ENCODE measurements at regions of chr1 and their contacts with region 1.

Region 1: GRCh38 chr1:203702130-203702577 is 62.8 kb upstream of the LAX1 start:
- DNase-seq: peak; percentile 48
- ATAC-seq: peak; percentile 54
- H3K4me3 Mint-ChIP-seq: no peak overlapping the region
- H3K27ac Mint-ChIP-seq: no peak overlapping the region
- H3K4me1 Mint-ChIP-seq: peaks cover 5% of the 10 kb centered on the region
- H3K27me3 Mint-ChIP-seq: no peaks in the 10 kb centered on the region
- CTCF ChIP-seq: peak; percentile 83

Region 2: GRCh38 chr1:203486618-203487370 is 215.4 kb before region 1 on chr1:
- CTCF ChIA-PET with region 1: interaction called, 11 read pairs
- POLR2A ChIA-PET with region 1: no interaction called
- intact Hi-C with region 1: no loop called
- DNase-seq: no peak
- ATAC-seq: no peak
- H3K4me3 Mint-ChIP-seq: peak overlapping the region; percentile 83
- H3K27ac Mint-ChIP-seq: no peak overlapping the region
- H3K4me1 Mint-ChIP-seq: peaks cover 5% of the 10 kb centered on the region
- H3K27me3 Mint-ChIP-seq: peaks cover 2% of the 10 kb centered on the region
- CTCF ChIP-seq: no peak

Region 3: GRCh38 chr1:203504397-203505250 is 197.5 kb before region 1 on chr1:
- CTCF ChIA-PET with region 1: interaction called, 160 read pairs
- POLR2A ChIA-PET with region 1: interaction called, 3 read pairs
- intact Hi-C with region 1: loop called (anchors 1 kb)
- DNase-seq: peak; percentile 45
- ATAC-seq: peak; percentile 57
- H3K4me3 Mint-ChIP-seq: no peak overlapping the region
- H3K27ac Mint-ChIP-seq: peak overlapping the region; percentile 10
- H3K4me1 Mint-ChIP-seq: peaks cover 2% of the 10 kb centered on the region
- H3K27me3 Mint-ChIP-seq: peaks cover 12% of the 10 kb centered on the region
- CTCF ChIP-seq: peak; percentile 83

Region 4: DNA sequence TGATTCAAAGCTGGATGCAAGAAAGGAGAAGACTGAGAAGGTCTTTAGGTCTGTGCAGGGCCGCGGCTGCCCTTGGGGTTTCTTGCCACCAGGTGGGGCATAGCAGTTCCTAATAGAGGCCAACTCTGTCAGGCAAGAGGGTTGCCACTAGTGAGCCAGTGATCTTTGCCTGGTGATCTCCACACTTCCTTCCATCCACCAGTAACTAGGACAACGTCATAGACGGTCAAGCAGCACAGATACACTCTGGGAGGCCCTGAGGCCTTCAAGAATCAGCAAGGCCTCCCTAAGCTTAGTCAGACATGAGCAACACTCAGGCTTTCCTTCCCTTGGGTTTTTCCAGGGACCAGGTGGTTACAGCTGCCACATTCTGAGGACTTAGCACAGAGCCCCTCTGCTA is 108.4 kb before region 1 on chr1:
- CTCF ChIA-PET with region 1: interaction called, 43 read pairs
- POLR2A ChIA-PET with region 1: interaction called, 3 read pairs
- intact Hi-C with region 1: loop called (anchors 1 kb)
- DNase-seq: peak; percentile 23
- ATAC-seq: peak; percentile 42
- H3K4me3 Mint-ChIP-seq: no peak overlapping the region
- H3K27ac Mint-ChIP-seq: no peak overlapping the region
- H3K4me1 Mint-ChIP-seq: no peaks in the 10 kb centered on the region
- H3K27me3 Mint-ChIP-seq: peaks cover 2% of the 10 kb centered on the region
- CTCF ChIP-seq: no peak

Region 5: DNA sequence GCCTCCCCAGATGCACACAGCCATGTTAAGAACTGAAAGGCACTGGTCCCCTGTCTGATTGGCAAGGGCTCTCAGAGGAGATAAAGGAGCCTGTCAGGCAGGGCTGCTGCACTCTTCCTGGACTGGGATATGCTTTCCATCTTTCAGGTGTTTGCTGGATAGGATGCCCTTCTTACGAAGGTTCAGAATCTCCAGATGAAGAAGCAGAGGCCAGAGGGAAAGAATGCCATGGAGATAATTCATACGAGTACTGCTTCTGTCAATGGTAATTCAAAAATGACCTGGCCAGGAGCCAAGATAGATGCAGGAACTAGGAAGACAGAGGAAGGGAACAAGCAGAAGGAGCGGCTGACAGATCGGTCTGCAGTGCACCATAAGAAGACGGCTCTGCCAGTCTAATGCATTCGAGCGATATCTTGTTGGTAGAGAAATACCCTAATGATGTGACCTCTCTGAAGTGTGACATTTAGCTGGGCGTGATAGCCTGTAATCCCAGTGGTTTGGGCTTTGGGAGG is 92.1 kb before region 1 on chr1:
- CTCF ChIA-PET with region 1: interaction called, 3 read pairs
- POLR2A ChIA-PET with region 1: no interaction called
- intact Hi-C with region 1: loop called (anchors 5 kb)
- DNase-seq: no peak
- ATAC-seq: no peak
- H3K4me3 Mint-ChIP-seq: no peak overlapping the region
- H3K27ac Mint-ChIP-seq: no peak overlapping the region
- H3K4me1 Mint-ChIP-seq: peaks cover 10% of the 10 kb centered on the region
- H3K27me3 Mint-ChIP-seq: no peaks in the 10 kb centered on the region
- CTCF ChIP-seq: no peak

Region 6: DNA sequence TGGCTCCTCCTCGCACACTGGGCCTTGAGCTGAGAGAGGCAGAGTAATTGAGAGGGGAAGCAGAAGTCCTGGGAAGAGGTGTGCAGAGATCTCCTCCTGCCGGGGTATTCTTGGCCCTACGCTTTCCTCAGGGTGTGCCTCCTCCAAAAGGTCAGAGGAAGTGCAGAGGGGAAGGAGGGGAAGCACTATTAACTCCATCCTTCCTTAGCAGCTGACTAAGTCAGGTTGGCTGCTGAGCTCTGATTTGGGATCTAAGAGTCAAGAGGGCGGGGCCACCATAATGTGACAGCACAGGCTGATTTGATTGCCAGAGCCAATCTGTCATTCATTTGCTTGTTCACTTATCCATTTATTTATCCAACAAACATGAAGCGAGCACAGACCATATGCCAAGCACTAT is 63.2 kb before region 1 on chr1:
- CTCF ChIA-PET with region 1: no interaction called
- POLR2A ChIA-PET with region 1: no interaction called
- intact Hi-C with region 1: no loop called
- DNase-seq: no peak
- ATAC-seq: no peak
- H3K4me3 Mint-ChIP-seq: no peak overlapping the region
- H3K27ac Mint-ChIP-seq: no peak overlapping the region
- H3K4me1 Mint-ChIP-seq: peaks cover 22% of the 10 kb centered on the region
- H3K27me3 Mint-ChIP-seq: no peaks in the 10 kb centered on the region
- CTCF ChIP-seq: no peak

Region 7: DNA sequence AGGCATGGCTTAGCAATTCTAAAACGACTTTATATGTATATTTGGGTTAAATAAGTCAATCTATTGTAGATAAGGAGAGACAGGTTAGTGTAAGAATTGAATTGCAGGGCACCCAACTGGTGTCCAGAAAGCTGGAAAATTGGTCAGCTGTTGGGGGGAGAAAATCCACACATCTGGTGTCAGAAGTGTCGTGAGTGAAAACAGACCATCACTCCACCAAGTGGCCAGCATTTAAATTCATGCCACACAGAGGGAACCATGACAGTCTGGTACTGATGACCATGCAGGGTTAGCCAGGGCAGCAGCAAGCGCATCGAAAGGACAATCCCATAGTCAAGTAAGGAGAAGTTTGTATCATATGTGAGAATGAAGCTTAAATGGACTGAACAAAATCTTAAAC is 74.5 kb after region 1 on chr1:
- CTCF ChIA-PET with region 1: interaction called, 6 read pairs
- POLR2A ChIA-PET with region 1: no interaction called
- intact Hi-C with region 1: loop called (anchors 5 kb)
- DNase-seq: no peak
- ATAC-seq: peak; percentile 37
- H3K4me3 Mint-ChIP-seq: no peak overlapping the region
- H3K27ac Mint-ChIP-seq: no peak overlapping the region
- H3K4me1 Mint-ChIP-seq: peaks cover 12% of the 10 kb centered on the region
- H3K27me3 Mint-ChIP-seq: no peaks in the 10 kb centered on the region
- CTCF ChIP-seq: no peak